ENCODE measurements at regions of chr19 and their contacts with region 1.

Region 1: DNA sequence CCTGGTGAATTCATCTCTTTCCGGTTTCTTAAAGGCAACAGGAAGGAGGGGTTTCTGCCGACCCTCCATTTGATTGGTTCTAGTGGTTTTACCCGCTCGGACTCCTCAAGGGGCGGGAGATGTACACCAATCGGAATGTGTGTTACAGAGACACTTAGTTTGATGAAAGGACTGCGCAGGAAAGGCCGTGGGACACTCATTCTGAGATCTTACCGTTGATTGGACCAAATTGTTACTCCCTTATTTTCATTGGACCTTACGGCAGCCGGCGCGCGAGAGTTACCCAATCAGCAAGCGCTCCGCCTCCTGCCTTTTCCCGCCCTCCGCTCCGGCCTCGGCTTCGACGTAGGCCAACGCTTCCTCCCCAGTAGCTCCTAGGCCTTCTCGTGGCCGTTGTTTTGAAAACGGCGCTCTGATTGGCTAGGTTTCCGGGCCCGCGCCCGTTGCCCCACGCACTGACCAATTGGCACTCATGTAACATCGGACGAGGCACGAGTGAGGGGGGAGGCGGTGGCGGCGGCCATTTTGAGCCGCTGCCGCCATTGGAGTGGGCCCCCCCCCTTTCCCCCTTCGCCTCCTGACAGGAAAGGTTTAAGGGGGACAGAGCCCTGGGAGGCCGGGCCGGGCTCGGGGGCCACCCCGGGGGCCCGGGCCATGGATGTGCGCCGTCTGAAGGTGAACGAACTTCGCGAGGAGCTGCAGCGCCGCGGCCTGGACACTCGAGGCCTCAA is at the start of gene HNRNPUL1:
- DNase-seq: peak; percentile 100
- ATAC-seq: peak; percentile 64
- H3K4me3 ChIP-seq: peak within 1 kb of the TSS; percentile 73 to 93 (median 90)
- H3K27ac ChIP-seq: peak within 1 kb of the TSS; percentile 97
- H3K4me1 ChIP-seq: peaks cover 28% of the 10 kb centered on the region
- H3K27me3 ChIP-seq: no peaks in the 10 kb centered on the region; a peak in 1 of 5 replicates
- CTCF ChIP-seq: peak; percentile 20; the same call in 1 of the 2 replicates
- EP300 ChIP-seq: 0 out of 4 replicates have a peak, but pooled peaks of 1 of the 2 experiments have one; percentile 6
- POLR2A ChIP-seq: peak in 1 of 2 experiments; percentile 25; a peak in 3 of 4 replicates
- RAD21 ChIP-seq: peak; percentile 36
- total RNA-seq, gene HNRNPUL1: 81.7 and 88.8 TPM in 2 replicates

Region 2: GRCh38 chr19:41159881-41160280 is 104.1 kb before region 1 on chr19:
- CTCF ChIA-PET with region 1: no interaction called
- POLR2A ChIA-PET with region 1: interaction called, 16 read pairs
- in situ Hi-C with region 1: no loop called
- intact Hi-C with region 1: no loop called
- DNase-seq: peak; percentile 73
- ATAC-seq: no peak
- H3K4me3 ChIP-seq: no peak overlapping the region
- H3K27ac ChIP-seq: peak overlapping the region; percentile 44
- H3K4me1 ChIP-seq: peaks cover 41% of the 10 kb centered on the region
- H3K27me3 ChIP-seq: no peaks in the 10 kb centered on the region
- CTCF ChIP-seq: no peak
- EP300 ChIP-seq: 0 out of 4 replicates have a peak, but pooled peaks of 1 of the 2 experiments have one; percentile 19
- POLR2A ChIP-seq: no peak
- RAD21 ChIP-seq: no peak

Region 3: DNA sequence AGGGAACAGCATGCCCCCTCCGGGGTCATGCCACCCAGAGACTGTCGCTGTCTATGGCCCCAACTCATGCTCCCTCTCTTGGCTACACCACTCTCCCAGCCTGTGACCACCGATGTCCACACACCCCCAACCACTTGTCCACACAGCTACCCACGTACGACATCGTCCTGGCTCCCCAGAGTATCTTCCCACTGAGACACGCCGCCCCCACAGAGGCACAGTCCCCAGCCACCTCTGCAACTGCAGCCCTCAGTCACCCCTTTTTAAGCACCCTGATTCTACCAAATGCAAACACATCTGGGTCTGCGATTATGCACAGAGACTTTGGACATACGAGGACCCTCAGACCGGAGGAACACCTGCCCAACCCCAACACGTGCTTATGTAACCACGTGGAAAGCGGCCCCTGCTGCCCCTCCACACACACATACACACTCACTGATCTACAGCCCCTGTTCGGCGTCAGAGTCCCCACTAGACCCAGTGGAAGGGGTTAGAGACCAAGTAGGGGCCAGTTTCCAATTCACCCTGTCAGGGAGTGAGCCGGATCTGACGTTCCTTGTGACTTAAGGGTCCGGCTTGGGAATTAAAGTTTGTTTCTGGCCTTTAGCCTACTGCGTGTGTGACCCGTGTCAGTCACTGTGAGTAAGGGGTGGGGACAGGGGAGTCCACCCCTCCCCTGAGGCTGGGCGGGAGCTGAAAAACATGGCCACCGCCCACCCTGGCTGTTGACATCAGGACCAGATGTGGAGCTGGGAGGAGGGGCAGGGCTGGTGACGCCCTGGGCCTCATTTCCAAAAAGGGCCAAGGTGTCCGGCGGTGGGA is 56.9 kb before region 1 on chr19:
- CTCF ChIA-PET with region 1: interaction called, 55 read pairs
- POLR2A ChIA-PET with region 1: interaction called, 40 read pairs
- in situ Hi-C with region 1: loop called (anchors 5 kb)
- intact Hi-C with region 1: no loop called
- DNase-seq: no peak
- ATAC-seq: no peak
- H3K4me3 ChIP-seq: no peak overlapping the region
- H3K27ac ChIP-seq: no peak overlapping the region
- H3K4me1 ChIP-seq: no peaks in the 10 kb centered on the region
- H3K27me3 ChIP-seq: no peaks in the 10 kb centered on the region
- CTCF ChIP-seq: no peak
- EP300 ChIP-seq: no peak
- POLR2A ChIP-seq: no peak
- RAD21 ChIP-seq: no peak

Region 4: DNA sequence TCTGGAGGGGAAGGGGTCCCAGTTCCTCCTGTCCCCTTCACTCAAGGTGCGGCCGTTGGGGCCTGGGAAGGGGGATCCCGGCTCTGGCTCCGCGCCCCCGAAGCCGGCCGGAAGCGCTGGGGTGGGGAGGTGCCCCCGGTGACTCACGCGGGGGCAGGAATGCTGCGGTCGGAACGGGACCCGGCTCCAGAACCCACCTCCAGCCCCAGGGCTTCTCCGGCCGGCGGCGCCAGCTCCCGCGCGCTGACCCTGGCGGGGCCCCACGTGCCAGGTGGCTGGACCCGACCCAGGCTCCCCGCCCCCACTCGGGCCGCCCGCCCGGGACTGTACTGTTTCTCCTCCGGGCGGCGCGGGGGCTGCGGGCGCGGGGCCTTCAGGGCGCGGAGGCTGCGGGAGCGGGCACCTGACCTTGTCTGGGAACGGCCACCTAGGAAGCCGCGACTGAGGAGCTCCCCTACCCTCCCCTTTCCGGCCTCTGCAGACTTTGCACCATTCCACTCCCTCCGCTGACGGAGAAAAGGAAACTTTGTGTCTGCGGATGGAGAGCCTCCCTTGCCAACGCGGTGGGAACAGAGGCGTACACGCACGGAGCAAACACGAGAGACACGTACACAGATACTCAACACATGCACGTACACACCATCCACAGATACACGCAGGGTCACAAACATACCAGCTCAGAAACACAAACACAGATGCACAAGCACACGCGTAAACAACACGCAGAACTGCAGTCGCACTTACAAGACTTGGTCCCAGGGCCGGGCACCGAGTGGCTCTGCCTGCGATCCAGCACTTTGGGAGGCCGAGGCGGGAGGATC is 37.8 kb before region 1 on chr19:
- CTCF ChIA-PET with region 1: no interaction called
- POLR2A ChIA-PET with region 1: interaction called, 104 read pairs
- in situ Hi-C with region 1: loop called (anchors 5 kb)
- intact Hi-C with region 1: loop called (anchors 1 kb)
- DNase-seq: peak; percentile 68
- ATAC-seq: peak; percentile 78
- H3K4me3 ChIP-seq: peak overlapping the region; percentile 63 to 80 (median 73)
- H3K27ac ChIP-seq: peak overlapping the region; percentile 77
- H3K4me1 ChIP-seq: peaks cover 69% of the 10 kb centered on the region
- H3K27me3 ChIP-seq: no peaks in the 10 kb centered on the region; a peak in 1 of 5 replicates
- CTCF ChIP-seq: no peak
- EP300 ChIP-seq: no peak; a peak in 1 of 4 replicates
- POLR2A ChIP-seq: peak; percentile 46 to 77; a peak in 3 of 4 replicates
- RAD21 ChIP-seq: no peak; the same call in none of the 2 replicates

Region 5: DNA sequence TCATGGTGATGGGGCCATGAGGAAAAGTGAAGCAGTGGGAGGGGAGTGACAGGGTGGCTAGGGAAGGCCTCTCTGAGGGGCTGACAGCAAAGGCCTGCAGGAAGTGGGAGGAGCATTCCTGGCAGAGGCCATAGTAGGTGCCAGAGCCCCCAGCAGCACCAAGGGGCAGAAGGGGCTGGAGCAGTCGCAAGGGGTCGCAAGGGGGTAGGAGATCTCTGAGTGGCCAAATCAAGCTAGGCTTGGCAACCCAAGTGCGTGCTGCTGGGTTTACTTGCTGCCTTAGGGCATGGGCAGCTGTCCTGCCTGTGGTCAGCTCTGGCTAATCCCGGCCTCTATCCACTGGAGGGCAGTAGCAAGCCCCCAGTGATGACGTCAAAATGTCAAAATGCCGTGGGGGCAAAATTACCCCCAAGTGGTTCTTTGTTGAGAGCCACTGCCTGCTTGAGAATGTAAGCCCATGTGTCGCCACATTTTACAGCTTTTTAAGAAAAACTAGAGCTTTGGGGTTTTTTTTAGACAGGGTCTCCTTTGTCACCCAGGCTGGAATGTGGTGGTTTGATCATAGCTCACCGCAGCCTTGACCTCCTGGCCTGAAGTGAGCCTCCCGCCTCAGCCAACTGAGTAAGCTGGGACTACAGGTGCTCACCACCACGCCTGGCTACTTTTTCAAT is 57.7 kb after region 1 on chr19:
- CTCF ChIA-PET with region 1: no interaction called
- POLR2A ChIA-PET with region 1: interaction called, 21 read pairs
- in situ Hi-C with region 1: no loop called
- intact Hi-C with region 1: no loop called
- DNase-seq: peak; percentile 82
- ATAC-seq: peak; percentile 33
- H3K4me3 ChIP-seq: no peak overlapping the region
- H3K27ac ChIP-seq: peak overlapping the region; percentile 74
- H3K4me1 ChIP-seq: peaks cover 71% of the 10 kb centered on the region
- H3K27me3 ChIP-seq: no peaks in the 10 kb centered on the region
- CTCF ChIP-seq: peak; percentile 80
- EP300 ChIP-seq: peak; percentile 56 to 63; a peak in 3 of 4 replicates
- POLR2A ChIP-seq: no peak
- RAD21 ChIP-seq: peak; percentile 63; the same call in 1 of the 2 replicates

Region 6: GRCh38 chr19:41363753-41364523 is 99.9 kb after region 1 on chr19 and contains the start of gene B9D2:
- CTCF ChIA-PET with region 1: no interaction called
- POLR2A ChIA-PET with region 1: interaction called, 12 read pairs
- in situ Hi-C with region 1: no loop called
- intact Hi-C with region 1: no loop called
- DNase-seq: peak; percentile 96
- ATAC-seq: peak; percentile 95
- H3K4me3 ChIP-seq: peak within 1 kb of the TSS; percentile 70 to 87 (median 84)
- H3K27ac ChIP-seq: peak within 1 kb of the TSS; percentile 95
- H3K4me1 ChIP-seq: peaks cover 50% of the 10 kb centered on the region
- H3K27me3 ChIP-seq: no peaks in the 10 kb centered on the region; a peak in 2 of 5 replicates
- CTCF ChIP-seq: no peak
- EP300 ChIP-seq: peak in 1 of 2 experiments; percentile 42; a peak in 1 of 4 replicates
- POLR2A ChIP-seq: peak; percentile 65 to 91; a peak in 3 of 4 replicates
- RAD21 ChIP-seq: no peak
- total RNA-seq, gene B9D2: 4.4 and 5.3 TPM in 2 replicates